ENCODE measurements at regions of chr17 and their contacts with region 1.

Region 1: DNA sequence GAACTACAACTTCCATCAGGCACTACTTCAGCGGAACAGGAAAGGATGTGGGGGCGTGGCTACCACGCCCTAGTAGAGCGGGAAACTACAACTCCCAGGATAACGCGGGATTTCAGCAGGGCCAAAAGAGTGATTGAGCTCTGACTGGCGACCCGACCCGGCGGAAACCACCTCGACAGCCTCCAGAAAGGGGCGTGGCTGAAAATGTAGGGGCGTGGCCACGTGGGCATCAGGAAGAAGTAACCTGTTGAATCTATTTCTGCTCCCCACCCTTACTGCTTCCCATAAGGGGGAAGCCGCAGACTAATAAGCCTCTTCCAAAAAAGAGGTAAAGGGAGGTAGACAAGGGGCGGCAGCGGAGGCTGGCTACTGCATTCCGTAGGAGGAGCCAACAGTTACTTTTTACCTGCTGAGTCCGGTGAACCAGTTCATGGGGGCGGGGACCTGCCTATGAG is at the start of gene TMEM102:
- DNase-seq: peak; percentile 99
- H3K4me3 Mint-ChIP-seq: peak within 1 kb of the TSS; percentile 93
- H3K27ac Mint-ChIP-seq: peak within 1 kb of the TSS; percentile 98
- H3K4me1 Mint-ChIP-seq: peaks cover 31% of the 10 kb centered on the region
- H3K27me3 Mint-ChIP-seq: peaks cover 7% of the 10 kb centered on the region
- total RNA-seq, gene TMEM102: 12.8 and 12.9 TPM in 2 replicates

Region 2: DNA sequence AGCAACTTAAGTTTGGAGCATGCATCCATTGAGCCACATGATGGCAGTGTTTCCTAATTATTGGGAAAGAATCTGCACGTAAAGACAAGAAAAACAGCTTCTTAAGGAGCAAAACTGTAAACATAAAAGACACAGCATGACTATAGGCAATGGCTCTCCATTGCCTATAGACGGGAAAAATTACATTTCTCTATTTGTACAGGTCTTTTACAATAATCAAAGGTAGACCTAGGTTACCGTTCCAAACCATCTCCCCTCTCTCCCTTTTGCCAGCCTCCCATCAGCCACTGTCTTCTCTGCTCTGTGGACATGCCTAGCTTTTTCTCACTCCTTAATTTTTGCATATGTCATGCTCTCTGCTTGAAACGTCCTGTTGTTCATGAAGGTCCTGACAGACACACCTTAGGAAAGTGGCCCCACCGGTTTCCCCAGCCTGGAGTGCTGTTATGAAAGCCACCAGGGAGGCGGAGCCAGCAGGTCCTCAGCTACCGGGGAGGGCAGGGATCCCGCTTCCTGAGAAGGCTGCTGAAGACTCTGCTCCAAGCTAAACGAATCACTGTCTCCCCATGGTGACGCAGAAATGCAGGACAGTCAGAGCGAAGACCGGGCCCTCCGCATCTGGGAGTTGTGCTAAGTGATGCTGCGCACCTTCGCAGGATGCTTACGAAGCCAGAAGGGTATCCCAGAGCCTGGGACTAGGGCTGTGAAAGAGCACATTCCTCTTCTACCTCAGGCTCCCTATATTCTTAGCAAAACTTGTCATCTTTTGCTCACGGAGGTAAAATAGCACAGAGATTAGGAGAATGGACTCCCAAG is 389.1 kb before region 1 on chr17:
- intact Hi-C with region 1: loop called (anchors 2 kb)
- DNase-seq: peak; percentile 87
- H3K4me3 Mint-ChIP-seq: peak overlapping the region; percentile 73
- H3K27ac Mint-ChIP-seq: peak overlapping the region; percentile 60
- H3K4me1 Mint-ChIP-seq: peaks cover 20% of the 10 kb centered on the region
- H3K27me3 Mint-ChIP-seq: peaks cover 15% of the 10 kb centered on the region

Region 3: DNA sequence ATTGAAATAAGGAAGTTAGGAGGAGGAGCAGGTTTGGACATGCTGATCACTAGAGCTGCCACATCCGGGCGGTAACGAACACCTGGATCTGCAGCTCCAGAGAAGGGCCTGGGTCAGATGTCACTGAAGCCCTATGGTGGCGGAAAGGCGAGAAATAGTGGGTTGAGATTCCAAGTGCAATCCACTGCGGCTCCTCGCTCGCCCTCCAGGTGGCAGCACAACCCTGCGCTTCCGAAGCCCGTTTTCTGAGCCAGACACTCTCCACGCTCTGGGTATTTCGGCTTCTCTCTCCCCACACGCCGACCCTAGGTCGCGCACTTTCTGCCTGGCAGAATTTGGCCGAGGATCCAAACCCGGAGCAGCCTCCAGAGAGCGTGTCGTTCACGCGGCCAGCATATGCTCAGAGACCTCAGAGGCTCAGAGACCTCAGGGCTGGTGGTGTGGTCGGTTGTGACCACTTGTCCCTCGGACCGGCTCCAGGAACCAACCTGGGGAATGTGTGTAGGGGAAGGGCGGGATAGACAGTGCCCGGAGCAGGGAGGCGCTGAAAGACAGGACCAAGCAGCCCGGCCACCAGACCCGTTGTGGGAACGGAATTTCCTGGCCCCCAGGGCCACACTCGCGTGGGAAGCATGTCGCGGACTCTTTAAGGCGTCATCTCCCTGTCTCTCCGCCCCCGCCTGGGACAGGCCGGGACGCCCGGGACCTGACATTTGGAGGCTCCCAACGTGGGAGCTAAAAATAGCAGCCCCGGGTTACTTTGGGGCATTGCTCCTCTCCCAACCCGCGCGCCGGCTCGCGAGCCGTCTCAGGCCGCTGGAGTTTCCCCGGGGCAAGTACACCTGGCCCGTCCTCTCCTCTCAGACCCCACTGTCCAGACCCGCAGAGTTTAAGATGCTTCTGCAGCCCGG is 154.5 kb before region 1 on chr17:
- intact Hi-C with region 1: loop called (anchors 1 kb)
- DNase-seq: peak; percentile 93
- H3K4me3 Mint-ChIP-seq: peak overlapping the region; percentile 84
- H3K27ac Mint-ChIP-seq: peak overlapping the region; percentile 76
- H3K4me1 Mint-ChIP-seq: peaks cover 10% of the 10 kb centered on the region
- H3K27me3 Mint-ChIP-seq: peaks cover 32% of the 10 kb centered on the region

Region 4: DNA sequence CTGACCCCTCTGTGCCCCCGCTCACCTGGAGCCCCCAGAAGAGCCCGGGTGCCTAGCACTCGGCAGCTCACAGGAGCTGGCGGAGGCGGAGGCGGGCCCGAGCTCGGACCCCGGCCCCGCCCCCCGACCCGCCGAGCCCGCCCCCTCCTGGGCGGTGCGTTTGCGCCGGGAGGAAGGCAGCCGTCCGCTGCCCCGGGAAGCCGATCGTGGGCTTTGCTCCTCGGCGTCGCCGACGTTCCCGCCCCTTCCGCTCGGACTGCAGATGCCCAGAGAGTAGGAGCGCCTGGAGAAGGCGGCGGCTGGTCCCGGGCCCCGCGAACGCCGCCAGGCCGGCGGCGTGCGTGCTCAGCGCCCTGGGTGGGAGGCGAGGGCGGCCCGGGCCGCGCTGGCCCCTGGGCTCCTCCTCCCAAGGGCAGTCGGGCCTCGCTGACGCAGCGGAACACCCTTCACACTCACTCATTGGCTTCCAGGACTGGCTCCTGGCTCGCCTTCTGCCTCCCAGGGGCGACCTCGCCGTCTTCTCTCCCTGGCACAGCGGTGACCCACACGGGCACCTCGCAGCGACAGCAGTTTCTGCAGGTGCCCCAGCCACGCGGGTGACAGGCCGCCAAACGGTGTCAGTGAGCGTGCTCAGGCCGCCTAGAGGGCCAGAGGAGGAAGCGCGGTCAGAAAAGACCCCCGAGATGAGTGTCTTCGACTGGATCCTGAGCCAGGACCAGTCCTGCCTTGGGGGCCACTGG is 40.6 kb before region 1 on chr17 and contains the start of gene PLSCR3:
- intact Hi-C with region 1: loop called (anchors 2 kb)
- DNase-seq: peak; percentile 97
- H3K4me3 Mint-ChIP-seq: peak within 1 kb of the TSS; percentile 96
- H3K27ac Mint-ChIP-seq: peak within 1 kb of the TSS; percentile 95
- H3K4me1 Mint-ChIP-seq: peaks cover 28% of the 10 kb centered on the region
- H3K27me3 Mint-ChIP-seq: no peaks in the 10 kb centered on the region
- total RNA-seq, gene PLSCR3: 75.5 and 79.8 TPM in 2 replicates

Region 5: DNA sequence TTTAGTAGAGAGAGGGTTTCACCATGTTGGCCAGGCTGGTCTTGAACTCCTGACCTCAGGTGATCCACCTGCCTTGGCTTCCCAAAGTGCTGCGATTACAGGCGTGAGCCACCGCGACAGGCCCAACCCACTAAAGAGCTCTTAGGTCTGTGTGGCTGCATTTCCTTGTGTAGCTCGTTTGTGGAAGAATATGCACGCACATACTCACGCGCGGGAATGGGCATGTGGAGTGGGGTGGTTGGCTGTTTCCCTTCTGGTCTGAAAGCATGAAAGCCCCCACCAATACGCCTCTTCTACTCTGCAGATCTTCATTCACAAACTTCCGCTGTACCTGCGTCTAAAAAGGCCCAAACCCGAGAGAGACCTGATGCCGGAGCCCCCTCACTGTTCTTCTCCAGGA is 19.7 kb after region 1 on chr17:
- intact Hi-C with region 1: loop called (anchors 1 kb)
- DNase-seq: no peak
- H3K4me3 Mint-ChIP-seq: peak overlapping the region; percentile 86
- H3K27ac Mint-ChIP-seq: peak overlapping the region; percentile 87
- H3K4me1 Mint-ChIP-seq: peaks cover 22% of the 10 kb centered on the region
- H3K27me3 Mint-ChIP-seq: no peaks in the 10 kb centered on the region

Region 6: DNA sequence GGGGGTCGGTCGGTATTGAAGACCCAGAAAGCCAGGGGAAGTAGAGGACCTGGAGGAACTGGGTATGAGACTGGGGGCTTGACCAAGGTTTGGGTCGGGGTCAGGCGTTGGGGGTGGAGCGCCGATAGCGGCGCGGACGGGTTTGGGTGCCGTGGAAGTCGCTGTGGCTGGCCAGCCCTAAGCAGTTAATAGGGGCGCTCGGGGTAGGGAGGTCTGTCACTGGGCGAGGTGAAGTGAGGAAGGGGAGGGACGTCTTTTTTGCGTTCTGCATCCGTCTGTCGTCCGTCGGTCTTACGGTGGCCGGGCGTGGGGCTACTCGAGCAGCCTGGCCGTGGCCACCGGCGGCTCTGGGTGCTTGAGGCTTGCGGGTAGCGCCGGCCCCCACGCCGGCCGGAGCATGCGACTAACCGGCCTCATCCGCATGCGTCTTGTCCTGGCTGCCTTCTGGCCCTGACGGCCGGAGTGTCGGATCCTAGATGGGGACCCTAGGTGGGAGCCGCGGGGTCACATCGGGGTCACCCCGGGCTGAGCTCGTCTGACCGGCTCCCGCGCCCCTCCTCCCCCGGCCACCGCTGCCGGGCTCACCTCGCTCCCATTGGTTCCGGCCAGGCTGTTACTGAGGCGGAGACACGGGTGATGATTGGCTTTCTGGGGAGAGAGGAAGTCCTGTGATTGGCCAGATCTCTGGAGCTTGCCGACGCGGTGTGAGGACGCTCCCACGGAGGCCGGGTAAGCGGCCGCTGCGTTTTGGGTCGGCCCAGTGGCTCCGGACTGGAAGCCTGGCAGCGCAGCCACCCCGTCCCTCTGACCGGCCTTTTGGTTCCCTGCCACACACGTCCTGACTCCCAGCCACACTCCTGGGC is 409.3 kb after region 1 on chr17:
- intact Hi-C with region 1: loop called (anchors 5 kb)
- DNase-seq: peak; percentile 96
- H3K4me3 Mint-ChIP-seq: peak overlapping the region; percentile 99
- H3K27ac Mint-ChIP-seq: peak overlapping the region; percentile 100
- H3K4me1 Mint-ChIP-seq: peaks cover 37% of the 10 kb centered on the region
- H3K27me3 Mint-ChIP-seq: peaks cover 2% of the 10 kb centered on the region